ENCODE measurements at regions of chr2 and their contacts with region 1.

Region 1: GRCh38 chr2:241149925-241150659 is at the start of gene PPP1R7:
- DNase-seq: peak; percentile 91 to 98 (median 94)
- ATAC-seq: peak; percentile 79
- H3K4me3 ChIP-seq: peak within 1 kb of the TSS; percentile 95 to 99
- H3K4me3 Mint-ChIP-seq: peak within 1 kb of the TSS; percentile 99
- H3K27ac ChIP-seq: peak within 1 kb of the TSS; percentile 67 to 70
- H3K27ac Mint-ChIP-seq: peak within 1 kb of the TSS; percentile 95
- H3K4me1 ChIP-seq: peaks cover 21% of the 10 kb centered on the region
- H3K4me1 Mint-ChIP-seq: peaks cover 48% of the 10 kb centered on the region
- H3K27me3 ChIP-seq: no peaks in the 10 kb centered on the region
- H3K27me3 Mint-ChIP-seq: no peaks in the 10 kb centered on the region
- CTCF ChIP-seq: peak; percentile 51
- total RNA-seq, gene PPP1R7: 47.5 to 50.9 TPM

Region 2: DNA sequence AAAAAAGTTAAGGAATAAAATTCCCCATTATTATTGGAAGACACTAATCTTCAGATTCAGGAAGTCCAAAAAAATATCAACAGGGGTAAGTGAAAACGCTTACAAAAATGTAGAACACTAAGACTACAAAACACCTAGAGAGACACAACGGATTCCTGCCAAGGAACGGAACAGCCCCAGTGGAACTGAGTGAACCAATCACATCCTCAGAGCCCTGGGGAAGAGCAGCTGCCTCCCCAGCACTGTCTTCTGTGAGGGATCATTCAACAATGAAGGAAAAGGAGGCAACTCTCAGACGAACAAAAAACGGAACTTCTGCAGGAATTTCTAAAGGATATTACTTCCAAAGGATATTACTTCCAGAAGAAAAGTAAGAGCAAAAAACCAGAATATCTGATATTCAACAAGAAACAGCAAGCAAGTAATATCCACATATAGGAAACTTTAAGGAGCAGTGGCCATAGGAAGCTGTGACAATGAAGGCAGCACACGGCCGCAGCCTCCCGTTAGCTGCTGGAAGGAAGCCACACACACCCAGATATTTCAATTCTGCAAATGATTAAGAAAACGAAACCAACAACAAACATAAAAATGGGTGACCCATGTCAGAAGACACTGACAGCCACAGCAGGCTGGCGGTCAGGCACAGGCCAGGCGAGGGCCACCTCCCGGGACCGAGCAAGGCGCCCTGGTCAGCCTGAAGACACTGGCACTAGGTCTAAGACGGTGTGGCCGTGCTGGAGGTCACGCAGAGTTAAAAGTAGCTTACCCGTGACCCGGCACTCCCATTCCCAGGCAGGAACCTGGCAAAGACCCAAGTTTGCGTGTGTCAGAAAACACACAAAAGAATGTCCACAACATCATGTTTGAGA is 1831.1 kb before region 1 on chr2:
- CTCF ChIA-PET with region 1: no interaction called
- POLR2A ChIA-PET with region 1: no interaction called
- intact Hi-C with region 1: no loop called
- DNase-seq: peak in 2 of 9 experiments; percentile 32 to 59
- ATAC-seq: no peak
- H3K4me3 ChIP-seq: peak overlapping the region; percentile 27 to 42
- H3K4me3 Mint-ChIP-seq: peak overlapping the region; percentile 74
- H3K27ac ChIP-seq: peak overlapping the region; percentile 65 to 74
- H3K27ac Mint-ChIP-seq: peak overlapping the region; percentile 93
- H3K4me1 ChIP-seq: peaks cover 57% of the 10 kb centered on the region
- H3K4me1 Mint-ChIP-seq: peaks cover 54% of the 10 kb centered on the region
- H3K27me3 ChIP-seq: no peaks in the 10 kb centered on the region
- H3K27me3 Mint-ChIP-seq: no peaks in the 10 kb centered on the region
- CTCF ChIP-seq: no peak

Region 3: DNA sequence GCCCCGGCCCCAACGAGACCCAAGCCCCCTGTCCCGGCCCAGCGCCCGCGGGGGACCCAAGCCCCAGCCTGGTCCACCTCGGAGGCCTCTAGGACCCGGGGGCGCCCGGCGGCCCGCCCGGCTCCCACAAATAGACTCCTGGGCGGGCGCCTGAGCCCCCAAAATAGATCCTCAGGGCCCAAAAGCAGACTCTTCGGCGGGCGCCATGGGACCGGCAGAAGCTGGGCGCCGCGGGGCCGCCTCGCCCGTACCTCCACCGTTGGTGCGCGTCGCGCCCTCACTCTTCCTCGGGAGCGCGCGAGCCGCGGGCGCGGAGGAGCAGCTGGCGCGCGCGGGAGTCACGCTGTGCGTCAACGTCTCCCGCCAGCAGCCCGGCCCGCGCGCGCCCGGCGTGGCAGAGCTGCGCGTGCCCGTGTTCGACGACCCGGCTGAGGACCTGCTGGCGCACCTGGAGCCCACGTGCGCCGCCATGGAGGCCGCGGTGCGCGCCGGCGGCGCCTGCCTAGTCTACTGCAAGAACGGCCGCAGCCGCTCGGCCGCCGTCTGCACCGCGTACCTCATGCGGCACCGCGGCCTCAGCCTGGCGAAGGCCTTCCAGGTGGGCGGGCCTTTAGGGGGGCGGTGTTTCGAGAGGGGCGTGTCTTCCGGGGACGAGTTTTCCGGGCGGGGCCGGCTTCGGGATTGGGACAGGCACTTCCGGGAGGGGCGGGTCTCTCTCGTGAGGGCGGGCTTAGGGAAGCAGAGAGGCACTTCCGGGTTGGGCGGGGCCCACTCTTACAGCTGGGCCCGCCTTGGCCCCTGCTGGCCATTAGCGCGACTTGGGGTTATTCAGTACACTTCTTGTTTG is 589.4 kb before region 1 on chr2:
- CTCF ChIA-PET with region 1: no interaction called
- POLR2A ChIA-PET with region 1: no interaction called
- intact Hi-C with region 1: loop called in 1 of 2 experiments (anchors 2 kb)
- DNase-seq: peak; percentile 98 to 100 (median 100)
- ATAC-seq: peak; percentile 59
- H3K4me3 ChIP-seq: peak overlapping the region; percentile 74 to 76
- H3K4me3 Mint-ChIP-seq: peak overlapping the region; percentile 89
- H3K27ac ChIP-seq: peak overlapping the region; percentile 82 to 84
- H3K27ac Mint-ChIP-seq: peak overlapping the region; percentile 96
- H3K4me1 ChIP-seq: peaks cover 80% of the 10 kb centered on the region
- H3K4me1 Mint-ChIP-seq: peaks cover 71% of the 10 kb centered on the region
- H3K27me3 ChIP-seq: no peaks in the 10 kb centered on the region
- H3K27me3 Mint-ChIP-seq: no peaks in the 10 kb centered on the region
- CTCF ChIP-seq: no peak

Region 4: GRCh38 chr2:240624950-240625621 is 525.0 kb before region 1 on chr2 and contains the start of gene GPR35:
- CTCF ChIA-PET with region 1: no interaction called
- POLR2A ChIA-PET with region 1: no interaction called
- intact Hi-C with region 1: no loop called
- DNase-seq: peak; percentile 46 to 97 (median 75)
- ATAC-seq: peak; percentile 70
- H3K4me3 ChIP-seq: peak within 1 kb of the TSS; percentile 15 to 43
- H3K4me3 Mint-ChIP-seq: peak within 1 kb of the TSS; percentile 62
- H3K27ac ChIP-seq: peak within 1 kb of the TSS; percentile 40 to 74
- H3K27ac Mint-ChIP-seq: peak within 1 kb of the TSS; percentile 91
- H3K4me1 ChIP-seq: peaks cover 70% of the 10 kb centered on the region
- H3K4me1 Mint-ChIP-seq: peaks cover 53% of the 10 kb centered on the region
- H3K27me3 ChIP-seq: no peaks in the 10 kb centered on the region
- H3K27me3 Mint-ChIP-seq: no peaks in the 10 kb centered on the region
- CTCF ChIP-seq: no peak
- total RNA-seq, gene GPR35: 17.5 to 18.7 TPM

Region 5: DNA sequence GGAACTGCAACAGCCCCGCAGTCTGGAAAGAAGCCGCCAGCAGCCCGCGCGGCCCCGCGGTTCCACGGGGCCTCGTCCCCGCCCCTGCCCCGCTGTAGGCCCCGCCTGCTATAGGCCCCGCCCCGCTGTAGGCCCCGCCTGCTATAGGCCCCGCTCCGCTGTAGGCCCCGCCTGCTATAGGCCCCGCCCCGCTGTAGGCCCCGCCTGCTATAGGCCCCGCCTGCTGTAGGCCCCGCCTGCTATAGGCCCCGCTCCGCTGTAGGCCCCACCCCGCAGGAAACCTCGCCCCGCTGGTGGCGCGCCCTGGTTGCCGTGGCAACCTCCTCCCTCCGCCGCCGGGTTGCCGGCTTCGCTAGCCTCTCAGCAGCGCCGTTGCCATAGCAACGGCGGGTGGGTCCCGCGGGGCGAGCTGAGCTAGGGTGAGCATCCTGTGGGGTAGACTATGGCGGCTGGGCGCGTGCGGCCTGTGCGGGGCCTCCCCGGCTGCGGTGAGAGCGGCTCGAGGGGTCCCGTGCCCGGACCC is 317.8 kb before region 1 on chr2:
- CTCF ChIA-PET with region 1: no interaction called
- POLR2A ChIA-PET with region 1: no interaction called
- intact Hi-C with region 1: loop called in 1 of 2 experiments (anchors 5 kb)
- DNase-seq: peak; percentile 96 to 99 (median 99)
- ATAC-seq: peak; percentile 93
- H3K4me3 ChIP-seq: peak overlapping the region; percentile 49 to 64
- H3K4me3 Mint-ChIP-seq: no peak overlapping the region
- H3K27ac ChIP-seq: peak overlapping the region in 1 of 2 experiments; percentile 19
- H3K27ac Mint-ChIP-seq: no peak overlapping the region
- H3K4me1 ChIP-seq: peaks cover 11% of the 10 kb centered on the region
- H3K4me1 Mint-ChIP-seq: peaks cover 6% of the 10 kb centered on the region
- H3K27me3 ChIP-seq: peaks cover 4 to 9% of the 10 kb centered on the region in 2 experiments
- H3K27me3 Mint-ChIP-seq: peaks cover 12% of the 10 kb centered on the region
- CTCF ChIP-seq: no peak

Region 6: GRCh38 chr2:240913810-240914644 is 236.1 kb before region 1 on chr2:
- CTCF ChIA-PET with region 1: interaction called, 4 read pairs
- POLR2A ChIA-PET with region 1: no interaction called
- intact Hi-C with region 1: loop called (anchors 1 to 2 kb)
- DNase-seq: peak; percentile 31 to 83 (median 60)
- ATAC-seq: peak; percentile 67
- H3K4me3 ChIP-seq: no peak overlapping the region
- H3K4me3 Mint-ChIP-seq: no peak overlapping the region
- H3K27ac ChIP-seq: no peak overlapping the region
- H3K27ac Mint-ChIP-seq: no peak overlapping the region
- H3K4me1 ChIP-seq: no peaks in the 10 kb centered on the region
- H3K4me1 Mint-ChIP-seq: no peaks in the 10 kb centered on the region
- H3K27me3 ChIP-seq: peaks cover 6 to 8% of the 10 kb centered on the region in 2 experiments
- H3K27me3 Mint-ChIP-seq: peaks cover 11% of the 10 kb centered on the region
- CTCF ChIP-seq: peak; percentile 87

Region 7: DNA sequence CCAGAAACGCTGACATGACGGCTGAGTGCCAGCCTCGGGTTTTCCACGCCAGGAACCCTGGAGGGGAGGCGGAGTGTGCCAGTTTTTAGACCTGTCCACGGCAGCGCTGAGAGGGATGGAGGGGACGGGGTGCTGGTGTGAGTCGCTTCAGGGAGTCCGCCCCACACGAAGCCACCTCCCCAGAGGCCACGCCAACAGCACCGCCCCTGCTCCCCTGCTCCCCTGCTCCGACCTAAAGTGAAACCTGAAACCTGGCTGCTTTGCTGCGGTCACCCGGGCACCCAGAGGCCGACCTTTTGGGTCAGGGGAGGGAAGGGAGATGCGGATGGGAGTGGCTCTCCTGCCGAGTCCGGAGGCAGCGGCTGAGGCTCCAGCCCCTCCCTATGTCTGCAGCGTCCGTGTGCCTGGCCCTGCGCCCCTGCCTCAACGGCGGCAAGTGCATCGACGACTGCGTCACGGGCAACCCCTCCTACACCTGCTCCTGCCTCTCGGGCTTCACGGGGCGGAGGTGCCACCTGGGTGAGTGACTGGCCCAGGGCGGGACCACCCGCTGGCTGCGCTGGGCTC is 113.6 kb before region 1 on chr2:
- CTCF ChIA-PET with region 1: no interaction called
- POLR2A ChIA-PET with region 1: no interaction called
- intact Hi-C with region 1: no loop called
- DNase-seq: peak; percentile 45 to 84 (median 68)
- ATAC-seq: peak; percentile 68
- H3K4me3 ChIP-seq: peak overlapping the region; percentile 66 to 75
- H3K4me3 Mint-ChIP-seq: peak overlapping the region; percentile 80
- H3K27ac ChIP-seq: peak overlapping the region; percentile 80 to 88
- H3K27ac Mint-ChIP-seq: peak overlapping the region; percentile 88
- H3K4me1 ChIP-seq: peaks cover 25% of the 10 kb centered on the region
- H3K4me1 Mint-ChIP-seq: peaks cover 15% of the 10 kb centered on the region
- H3K27me3 ChIP-seq: no peaks in the 10 kb centered on the region
- H3K27me3 Mint-ChIP-seq: no peaks in the 10 kb centered on the region
- CTCF ChIP-seq: no peak

Region 8: DNA sequence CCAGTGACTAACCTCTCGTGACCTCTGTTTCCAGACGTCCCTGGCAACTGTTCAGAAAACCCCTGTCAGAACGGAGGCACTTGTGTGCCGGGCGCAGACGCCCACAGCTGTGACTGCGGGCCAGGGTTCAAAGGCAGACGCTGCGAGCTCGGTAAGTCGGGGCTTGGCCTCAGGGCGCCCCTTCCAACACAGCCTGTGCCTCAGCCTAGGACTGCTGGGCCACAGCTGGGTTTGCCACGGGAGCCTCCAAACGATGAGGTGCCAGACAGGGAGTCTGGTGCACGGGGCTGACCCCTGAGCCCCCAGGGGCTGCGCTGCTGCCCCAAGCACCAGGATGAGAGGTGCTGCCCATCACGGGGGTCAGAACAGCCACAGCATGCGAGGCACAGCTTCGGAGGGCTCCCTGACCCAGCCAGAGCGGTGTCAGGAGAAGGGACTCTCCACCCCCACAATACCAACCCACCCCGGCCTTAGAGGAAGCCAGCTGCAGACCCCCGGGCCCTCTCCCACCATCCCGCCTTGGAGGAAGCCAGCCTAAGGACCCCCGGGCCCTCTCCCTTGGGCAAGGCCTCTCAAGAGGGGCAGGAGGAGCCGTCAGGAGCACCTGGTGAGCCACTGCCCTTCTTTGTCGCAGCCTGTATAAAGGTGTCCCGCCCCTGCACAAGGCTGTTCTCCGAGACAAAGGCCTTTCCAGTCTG is 68.3 kb before region 1 on chr2:
- CTCF ChIA-PET with region 1: interaction called, 58 read pairs
- POLR2A ChIA-PET with region 1: interaction called, 24 read pairs
- intact Hi-C with region 1: loop called (anchors 1 kb)
- DNase-seq: peak in 1 of 9 experiments; percentile 49
- ATAC-seq: no peak
- H3K4me3 ChIP-seq: no peak overlapping the region
- H3K4me3 Mint-ChIP-seq: no peak overlapping the region
- H3K27ac ChIP-seq: no peak overlapping the region
- H3K27ac Mint-ChIP-seq: peak overlapping the region; percentile 52
- H3K4me1 ChIP-seq: peaks cover 3% of the 10 kb centered on the region
- H3K4me1 Mint-ChIP-seq: peaks cover 25% of the 10 kb centered on the region
- H3K27me3 ChIP-seq: no peaks in the 10 kb centered on the region
- H3K27me3 Mint-ChIP-seq: no peaks in the 10 kb centered on the region
- CTCF ChIP-seq: no peak

Region 9: GRCh38 chr2:241102239-241102803 is 47.8 kb before region 1 on chr2 and contains the start of gene MTERF4:
- CTCF ChIA-PET with region 1: interaction called, 11 read pairs
- POLR2A ChIA-PET with region 1: interaction called, 73 read pairs
- intact Hi-C with region 1: loop called (anchors 1 kb)
- DNase-seq: peak; percentile 74 to 95 (median 88)
- ATAC-seq: peak; percentile 85
- H3K4me3 ChIP-seq: peak within 1 kb of the TSS; percentile 74 to 83
- H3K4me3 Mint-ChIP-seq: peak within 1 kb of the TSS; percentile 95
- H3K27ac ChIP-seq: peak within 1 kb of the TSS; percentile 86 to 94
- H3K27ac Mint-ChIP-seq: peak within 1 kb of the TSS; percentile 98
- H3K4me1 ChIP-seq: peaks cover 71% of the 10 kb centered on the region
- H3K4me1 Mint-ChIP-seq: peaks cover 84% of the 10 kb centered on the region
- H3K27me3 ChIP-seq: no peaks in the 10 kb centered on the region
- H3K27me3 Mint-ChIP-seq: no peaks in the 10 kb centered on the region
- CTCF ChIP-seq: no peak
- total RNA-seq, gene MTERF4: 100.0 to 102 TPM

Region 10: GRCh38 chr2:241188361-241189050 is 38.4 kb after region 1 on chr2 and contains the start of gene ANO7:
- CTCF ChIA-PET with region 1: no interaction called
- POLR2A ChIA-PET with region 1: no interaction called
- intact Hi-C with region 1: no loop called
- DNase-seq: no peak
- ATAC-seq: no peak
- H3K4me3 ChIP-seq: no peak within 1 kb of the TSS
- H3K4me3 Mint-ChIP-seq: no peak within 1 kb of the TSS
- H3K27ac ChIP-seq: no peak within 1 kb of the TSS
- H3K27ac Mint-ChIP-seq: no peak within 1 kb of the TSS
- H3K4me1 ChIP-seq: no peaks in the 10 kb centered on the region
- H3K4me1 Mint-ChIP-seq: no peaks in the 10 kb centered on the region
- H3K27me3 ChIP-seq: no peaks in the 10 kb centered on the region
- H3K27me3 Mint-ChIP-seq: no peaks in the 10 kb centered on the region
- CTCF ChIP-seq: no peak
- total RNA-seq, gene ANO7: 0.30 TPM in 1 of 2 experiments, not detected in the other

Region 11: GRCh38 chr2:241514986-241515737 is 365.1 kb after region 1 on chr2:
- CTCF ChIA-PET with region 1: no interaction called
- POLR2A ChIA-PET with region 1: no interaction called
- intact Hi-C with region 1: loop called in 1 of 2 experiments (anchors 5 kb)
- DNase-seq: no peak
- ATAC-seq: no peak
- H3K4me3 ChIP-seq: no peak overlapping the region
- H3K4me3 Mint-ChIP-seq: no peak overlapping the region
- H3K27ac ChIP-seq: no peak overlapping the region
- H3K27ac Mint-ChIP-seq: no peak overlapping the region
- H3K4me1 ChIP-seq: no peaks in the 10 kb centered on the region
- H3K4me1 Mint-ChIP-seq: peaks cover 9% of the 10 kb centered on the region
- H3K27me3 ChIP-seq: peaks cover 0 to 7% of the 10 kb centered on the region in 2 experiments
- H3K27me3 Mint-ChIP-seq: peaks cover 4% of the 10 kb centered on the region
- CTCF ChIP-seq: no peak